CD4-positive, alpha-beta memory T cell (primary cell): ENCODE measurements at regions of chr22 and their contacts with region 1.

Region 1: GRCh38 chr22:24805790-24806662 is at the start of gene SGSM1:
- DNase-seq: peak; percentile 72 to 80 (median 76)
- H3K4me3 ChIP-seq: peak within 1 kb of the TSS; percentile 36 to 54
- H3K4me3 Mint-ChIP-seq: peak within 1 kb of the TSS; percentile 78 to 85 (median 82)
- H3K27ac ChIP-seq: peak within 1 kb of the TSS; percentile 55
- H3K27ac Mint-ChIP-seq: peak within 1 kb of the TSS; percentile 52 to 93 (median 82)
- H3K4me1 ChIP-seq: peaks cover 19% of the 10 kb centered on the region
- H3K4me1 Mint-ChIP-seq: peaks cover 24 to 38% (median 31%) of the 10 kb centered on the region in 4 donors
- H3K27me3 ChIP-seq: no peaks in the 10 kb centered on the region
- H3K27me3 Mint-ChIP-seq: no peaks in the 10 kb centered on the region
- total RNA-seq, gene SGSM1: 3.2 to 3.4 TPM

Region 2: GRCh38 chr22:24789516-24789915 is 16.5 kb before region 1 on chr22:
- CTCF ChIA-PET with region 1: interaction called, 14 read pairs
- POLR2A ChIA-PET with region 1: no interaction called
- intact Hi-C with region 1: no loop called
- DNase-seq: no peak
- H3K4me3 ChIP-seq: no peak overlapping the region
- H3K4me3 Mint-ChIP-seq: no peak overlapping the region
- H3K27ac ChIP-seq: no peak overlapping the region
- H3K27ac Mint-ChIP-seq: no peak overlapping the region
- H3K4me1 ChIP-seq: no peaks in the 10 kb centered on the region
- H3K4me1 Mint-ChIP-seq: no peaks in the 10 kb centered on the region
- H3K27me3 ChIP-seq: no peaks in the 10 kb centered on the region
- H3K27me3 Mint-ChIP-seq: no peaks in the 10 kb centered on the region

Region 3: GRCh38 chr22:24845041-24845898 is 39.2 kb after region 1 on chr22:
- CTCF ChIA-PET with region 1: interaction called, 24 read pairs
- POLR2A ChIA-PET with region 1: no interaction called
- intact Hi-C with region 1: no loop called
- DNase-seq: no peak
- H3K4me3 ChIP-seq: no peak overlapping the region
- H3K4me3 Mint-ChIP-seq: peak overlapping the region in 2 of 8 donors; percentile 6 to 34
- H3K27ac ChIP-seq: no peak overlapping the region
- H3K27ac Mint-ChIP-seq: peak overlapping the region in 1 of 7 donors; percentile 32
- H3K4me1 ChIP-seq: no peaks in the 10 kb centered on the region
- H3K4me1 Mint-ChIP-seq: peaks cover 3 to 19% (median 14%) of the 10 kb centered on the region in 4 donors
- H3K27me3 ChIP-seq: no peaks in the 10 kb centered on the region
- H3K27me3 Mint-ChIP-seq: no peaks in the 10 kb centered on the region

Region 4: GRCh38 chr22:24965822-24966626 is 160.0 kb after region 1 on chr22:
- CTCF ChIA-PET with region 1: no interaction called
- POLR2A ChIA-PET with region 1: no interaction called
- intact Hi-C with region 1: no loop called
- DNase-seq: no peak
- H3K4me3 ChIP-seq: no peak overlapping the region
- H3K4me3 Mint-ChIP-seq: no peak overlapping the region
- H3K27ac ChIP-seq: no peak overlapping the region
- H3K27ac Mint-ChIP-seq: no peak overlapping the region
- H3K4me1 ChIP-seq: no peaks in the 10 kb centered on the region
- H3K4me1 Mint-ChIP-seq: no peaks in the 10 kb centered on the region
- H3K27me3 ChIP-seq: no peaks in the 10 kb centered on the region
- H3K27me3 Mint-ChIP-seq: no peaks in the 10 kb centered on the region